CD8-positive, alpha-beta memory T cell (primary cell): ENCODE measurements at regions of chr4 and their contacts with region 1.

Region 1: DNA sequence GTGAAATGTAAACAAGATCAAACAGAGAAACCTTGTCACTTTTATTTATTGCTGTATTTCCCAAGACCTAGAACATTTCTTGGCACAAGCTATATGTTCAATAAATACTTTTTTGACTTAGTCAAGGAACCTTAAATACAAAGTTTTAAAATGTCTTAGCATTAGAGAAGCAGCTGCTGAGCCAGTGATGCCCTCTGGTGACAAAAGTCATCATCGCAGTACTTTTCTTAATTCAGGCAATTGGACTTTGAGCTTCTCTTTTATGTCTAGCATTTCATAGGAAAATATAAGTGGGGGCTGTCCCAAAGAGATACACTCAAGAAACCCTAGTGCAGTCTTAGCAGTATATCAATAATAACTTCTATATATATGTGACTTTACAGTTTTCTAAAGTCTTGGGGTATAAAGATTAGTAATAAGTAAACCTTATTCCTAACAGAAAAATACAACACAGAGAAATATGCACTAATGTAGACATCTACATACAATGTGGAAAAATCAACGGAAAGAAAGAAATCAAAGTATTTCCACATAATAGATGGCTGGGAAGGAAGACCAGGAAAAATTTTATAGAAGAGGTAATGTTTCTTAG is 118.4 kb downstream of the DTHD1 start:
- DNase-seq: peak; percentile 24 to 61 (median 31)
- H3K4me3 ChIP-seq: no peak overlapping the region
- H3K4me3 Mint-ChIP-seq: no peak overlapping the region
- H3K27ac ChIP-seq: no peak overlapping the region
- H3K27ac Mint-ChIP-seq: no peak overlapping the region
- H3K4me1 ChIP-seq: peaks cover 2% of the 10 kb centered on the region
- H3K4me1 Mint-ChIP-seq: peaks cover 0 to 7% (median 6%) of the 10 kb centered on the region in 3 donors
- H3K27me3 ChIP-seq: no peaks in the 10 kb centered on the region
- H3K27me3 Mint-ChIP-seq: no peaks in the 10 kb centered on the region

Region 2: GRCh38 chr4:36255577-36255976 is 144.3 kb before region 1 on chr4:
- CTCF ChIA-PET with region 1: interaction called, 10 read pairs
- POLR2A ChIA-PET with region 1: no interaction called
- DNase-seq: peak; percentile 46 to 90 (median 82)
- H3K4me3 ChIP-seq: no peak overlapping the region
- H3K4me3 Mint-ChIP-seq: peak overlapping the region; percentile 38 to 85 (median 79)
- H3K27ac ChIP-seq: no peak overlapping the region
- H3K27ac Mint-ChIP-seq: peak overlapping the region; percentile 61 to 97 (median 92)
- H3K4me1 ChIP-seq: peaks cover 40% of the 10 kb centered on the region
- H3K4me1 Mint-ChIP-seq: peaks cover 57 to 64% (median 64%) of the 10 kb centered on the region in 3 donors
- H3K27me3 ChIP-seq: no peaks in the 10 kb centered on the region
- H3K27me3 Mint-ChIP-seq: no peaks in the 10 kb centered on the region

Region 3: GRCh38 chr4:36325499-36325898 is 74.4 kb before region 1 on chr4:
- CTCF ChIA-PET with region 1: interaction called, 10 read pairs
- POLR2A ChIA-PET with region 1: no interaction called
- DNase-seq: peak in 1 of 5 donors; percentile 6
- H3K4me3 ChIP-seq: no peak overlapping the region
- H3K4me3 Mint-ChIP-seq: peak overlapping the region in 5 of 7 donors; percentile 1 to 60 (median 16)
- H3K27ac ChIP-seq: no peak overlapping the region
- H3K27ac Mint-ChIP-seq: peak overlapping the region; percentile 0 to 91 (median 44)
- H3K4me1 ChIP-seq: peaks cover 35% of the 10 kb centered on the region
- H3K4me1 Mint-ChIP-seq: peaks cover 55 to 72% (median 70%) of the 10 kb centered on the region in 3 donors
- H3K27me3 ChIP-seq: no peaks in the 10 kb centered on the region
- H3K27me3 Mint-ChIP-seq: peaks cover 0 to 2% of the 10 kb centered on the region in 2 donors

Region 4: DNA sequence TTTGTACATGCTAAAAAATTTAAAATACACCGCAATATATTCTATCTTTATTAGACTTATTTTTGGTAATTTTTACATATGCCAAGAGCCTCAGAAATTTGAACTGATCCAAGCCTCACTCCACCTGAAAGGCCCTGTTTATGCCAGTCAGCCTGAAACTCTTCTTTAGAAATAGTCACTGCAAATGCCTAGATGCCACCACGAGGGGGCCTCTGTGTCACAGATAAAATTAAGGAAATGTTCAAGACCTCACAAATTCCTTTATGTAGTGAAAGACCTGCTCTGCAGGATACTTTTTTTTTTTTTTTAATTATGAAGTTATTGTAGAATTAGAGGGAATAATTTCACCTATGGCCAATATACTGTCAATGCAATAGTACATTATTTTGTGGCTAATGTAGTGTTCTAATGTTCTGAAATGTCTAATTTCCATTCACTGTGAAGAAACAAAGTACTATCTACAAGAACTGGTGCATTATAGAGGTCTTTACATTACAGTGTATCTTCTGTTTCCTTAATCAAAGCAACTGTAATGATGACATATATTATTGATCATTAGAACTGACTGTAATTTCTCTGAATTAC is 48.7 kb before region 1 on chr4:
- CTCF ChIA-PET with region 1: interaction called, 40 read pairs
- POLR2A ChIA-PET with region 1: no interaction called
- DNase-seq: peak; percentile 50 to 81 (median 61)
- H3K4me3 ChIP-seq: no peak overlapping the region
- H3K4me3 Mint-ChIP-seq: no peak overlapping the region
- H3K27ac ChIP-seq: no peak overlapping the region
- H3K27ac Mint-ChIP-seq: peak overlapping the region in 3 of 8 donors; percentile 28 to 70 (median 69)
- H3K4me1 ChIP-seq: peaks cover 3% of the 10 kb centered on the region
- H3K4me1 Mint-ChIP-seq: peaks cover 20 to 33% (median 23%) of the 10 kb centered on the region in 3 donors
- H3K27me3 ChIP-seq: no peaks in the 10 kb centered on the region
- H3K27me3 Mint-ChIP-seq: no peaks in the 10 kb centered on the region

Region 5: DNA sequence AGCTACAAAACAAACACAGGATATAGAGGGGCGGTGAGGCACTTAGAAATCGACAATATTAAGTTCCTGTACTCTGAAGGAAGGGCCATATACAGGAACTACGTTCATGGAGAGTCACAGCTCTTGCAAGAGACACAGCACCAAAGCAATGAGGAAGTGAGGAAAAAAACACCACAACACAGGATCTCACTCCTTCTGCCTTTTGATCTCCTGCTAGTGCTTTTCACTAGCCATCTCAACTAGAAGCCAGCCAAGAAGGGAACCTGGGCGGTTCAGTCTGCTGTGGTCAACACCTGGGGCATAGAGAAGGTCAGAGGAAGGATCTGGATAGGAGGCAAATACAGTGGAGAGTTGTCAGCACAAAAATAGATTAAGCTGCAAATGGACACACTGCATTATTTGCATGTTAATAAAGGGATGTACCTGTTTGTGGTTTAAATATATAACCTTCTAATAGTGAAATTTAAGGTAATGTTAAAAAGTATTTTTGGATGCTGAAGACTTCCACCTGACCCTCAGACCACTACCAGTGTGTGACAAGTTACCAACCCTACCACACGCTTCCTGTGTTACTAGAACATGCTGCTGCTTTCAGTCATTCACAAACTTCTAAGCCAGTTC is 13.8 kb before region 1 on chr4:
- CTCF ChIA-PET with region 1: interaction called, 7 read pairs
- POLR2A ChIA-PET with region 1: interaction called, 12 read pairs
- DNase-seq: peak; percentile 9 to 82 (median 68)
- H3K4me3 ChIP-seq: peak overlapping the region; percentile 0
- H3K4me3 Mint-ChIP-seq: peak overlapping the region in 6 of 7 donors; percentile 59 to 84 (median 64)
- H3K27ac ChIP-seq: peak overlapping the region; percentile 18
- H3K27ac Mint-ChIP-seq: peak overlapping the region; percentile 12 to 98 (median 88)
- H3K4me1 ChIP-seq: peaks cover 22% of the 10 kb centered on the region
- H3K4me1 Mint-ChIP-seq: peaks cover 22 to 30% (median 27%) of the 10 kb centered on the region in 3 donors
- H3K27me3 ChIP-seq: no peaks in the 10 kb centered on the region
- H3K27me3 Mint-ChIP-seq: no peaks in the 10 kb centered on the region